ENCODE measurements at regions of chr3 and their contacts with region 1.

Region 1: GRCh38 chr3:192851821-192852424 is 65.7 kb downstream of the MB21D2 start:
- DNase-seq: no peak
- H3K4me3 Mint-ChIP-seq: no peak overlapping the region
- H3K27ac Mint-ChIP-seq: peak overlapping the region; percentile 38
- H3K4me1 Mint-ChIP-seq: peaks cover 46% of the 10 kb centered on the region
- H3K27me3 Mint-ChIP-seq: no peaks in the 10 kb centered on the region

Region 2: DNA sequence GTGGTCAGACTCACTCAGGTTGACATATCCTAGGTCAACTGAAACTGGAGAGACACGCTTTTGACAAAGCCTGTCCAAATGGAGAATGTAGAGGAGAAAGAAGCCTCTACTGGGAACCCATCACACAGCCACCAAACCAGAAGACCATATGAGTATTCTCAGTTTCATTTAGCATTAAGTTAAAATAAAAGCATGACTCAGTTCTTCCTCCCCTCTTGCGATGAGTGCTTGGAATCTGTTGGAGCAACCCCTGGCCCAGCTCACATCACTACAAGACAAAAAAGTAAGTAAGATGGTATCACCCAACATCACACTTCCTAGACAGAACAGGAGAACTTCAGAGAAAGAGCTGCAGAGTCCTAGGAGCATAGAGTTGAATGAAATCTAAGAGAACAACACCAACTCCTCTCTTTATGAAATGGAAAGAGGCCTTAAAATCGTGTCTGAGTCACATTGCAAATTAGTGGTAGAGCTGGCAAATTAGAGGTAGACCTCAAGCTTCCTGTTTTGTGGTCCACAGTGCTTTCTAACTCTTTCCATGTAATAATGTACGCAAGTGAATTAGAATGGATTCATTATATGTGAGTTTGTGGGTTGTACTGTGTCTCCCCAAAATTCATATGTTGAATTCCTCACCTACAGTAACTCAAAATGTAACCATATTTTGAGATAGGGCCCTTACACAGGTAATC is 175.8 kb before region 1 on chr3:
- intact Hi-C with region 1: loop called (anchors 10 kb)
- DNase-seq: no peak
- H3K4me3 Mint-ChIP-seq: no peak overlapping the region
- H3K27ac Mint-ChIP-seq: peak overlapping the region; percentile 90
- H3K4me1 Mint-ChIP-seq: peaks cover 11% of the 10 kb centered on the region
- H3K27me3 Mint-ChIP-seq: peaks cover 22% of the 10 kb centered on the region

Region 3: DNA sequence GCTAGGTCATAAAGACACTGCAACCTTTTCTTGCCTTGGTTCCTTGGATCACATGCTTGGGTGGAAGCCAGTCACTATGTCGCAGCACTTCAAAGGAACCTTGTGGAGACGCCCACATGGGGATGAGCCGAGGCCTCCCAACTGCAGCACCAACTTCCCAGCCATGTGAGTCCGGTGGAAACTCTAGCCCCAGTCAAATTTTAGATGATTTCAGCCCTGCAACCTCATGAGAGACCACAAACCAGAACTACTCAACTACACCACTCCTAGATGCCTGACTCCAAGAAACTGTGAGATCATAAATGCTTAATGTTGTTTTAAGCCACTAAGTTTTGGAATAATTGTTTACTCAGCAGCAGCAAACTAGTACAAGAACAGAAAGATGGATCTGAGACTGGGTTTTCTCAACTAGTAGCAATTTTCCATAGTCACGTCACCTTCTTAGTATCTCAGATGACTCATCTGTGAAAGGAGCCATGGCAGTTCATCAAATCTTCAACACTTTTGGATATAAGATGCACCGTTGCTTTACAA is 20.7 kb before region 1 on chr3:
- intact Hi-C with region 1: loop called (anchors 1 kb)
- DNase-seq: no peak
- H3K4me3 Mint-ChIP-seq: no peak overlapping the region
- H3K27ac Mint-ChIP-seq: peak overlapping the region; percentile 77
- H3K4me1 Mint-ChIP-seq: peaks cover 38% of the 10 kb centered on the region
- H3K27me3 Mint-ChIP-seq: no peaks in the 10 kb centered on the region

Region 4: DNA sequence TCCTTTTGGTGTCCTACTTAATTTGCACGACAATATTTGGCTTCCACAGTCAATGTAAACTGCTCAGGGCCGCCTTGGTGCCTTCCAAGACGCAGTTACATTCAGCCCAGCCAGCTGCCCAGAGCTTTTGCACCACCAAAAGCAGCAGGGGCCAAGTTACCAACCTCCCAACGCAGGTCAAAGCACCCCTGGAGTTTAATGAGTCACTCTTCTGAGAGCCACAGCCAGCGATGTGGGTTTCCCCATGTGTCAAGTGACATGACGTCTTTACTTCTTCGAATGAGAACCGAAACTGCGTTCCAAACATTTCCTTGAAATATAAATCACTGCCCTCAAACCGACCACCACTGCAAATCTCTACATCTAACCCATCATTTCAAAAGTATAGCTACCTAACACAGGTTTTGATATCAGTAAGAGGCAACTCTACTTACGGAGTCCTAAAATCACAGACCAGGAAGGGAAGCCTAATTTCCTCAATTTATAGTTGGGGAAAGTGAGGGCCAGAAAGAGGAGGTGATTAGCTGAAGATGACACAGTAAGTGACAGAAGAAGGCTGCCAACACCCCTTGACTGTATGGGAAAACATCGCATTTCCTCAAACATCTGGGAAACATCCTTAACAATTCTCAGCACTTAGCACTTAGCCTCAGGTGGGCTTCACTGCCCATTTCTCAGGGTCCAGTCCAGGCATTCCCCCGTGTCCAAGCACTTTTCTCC is 41.2 kb after region 1 on chr3:
- intact Hi-C with region 1: loop called (anchors 1 kb)
- DNase-seq: peak; percentile 77
- H3K4me3 Mint-ChIP-seq: peak overlapping the region; percentile 34
- H3K27ac Mint-ChIP-seq: peak overlapping the region; percentile 82
- H3K4me1 Mint-ChIP-seq: peaks cover 79% of the 10 kb centered on the region
- H3K27me3 Mint-ChIP-seq: peaks cover 10% of the 10 kb centered on the region

Region 5: GRCh38 chr3:192906949-192907348 is 55.0 kb after region 1 on chr3:
- intact Hi-C with region 1: loop called (anchors 1 kb)
- DNase-seq: no peak
- H3K4me3 Mint-ChIP-seq: no peak overlapping the region
- H3K27ac Mint-ChIP-seq: peak overlapping the region; percentile 72
- H3K4me1 Mint-ChIP-seq: peaks cover 35% of the 10 kb centered on the region
- H3K27me3 Mint-ChIP-seq: peaks cover 2% of the 10 kb centered on the region

Measured in activated T-helper 2 cell treated with anti-CD3 and anti-CD28 coated beads, Interferon-gamma antibody, Interleukin-2, Interleukin-4, amounts not matched to agents 10 μg/mL and 5 μg/mL and 100 μg/mL, durations not matched to agents 14 hours and 24 hours and 36 hours (primary cell).